ENCODE measurements at regions of chr6 and their contacts with region 1.

Region 1: DNA sequence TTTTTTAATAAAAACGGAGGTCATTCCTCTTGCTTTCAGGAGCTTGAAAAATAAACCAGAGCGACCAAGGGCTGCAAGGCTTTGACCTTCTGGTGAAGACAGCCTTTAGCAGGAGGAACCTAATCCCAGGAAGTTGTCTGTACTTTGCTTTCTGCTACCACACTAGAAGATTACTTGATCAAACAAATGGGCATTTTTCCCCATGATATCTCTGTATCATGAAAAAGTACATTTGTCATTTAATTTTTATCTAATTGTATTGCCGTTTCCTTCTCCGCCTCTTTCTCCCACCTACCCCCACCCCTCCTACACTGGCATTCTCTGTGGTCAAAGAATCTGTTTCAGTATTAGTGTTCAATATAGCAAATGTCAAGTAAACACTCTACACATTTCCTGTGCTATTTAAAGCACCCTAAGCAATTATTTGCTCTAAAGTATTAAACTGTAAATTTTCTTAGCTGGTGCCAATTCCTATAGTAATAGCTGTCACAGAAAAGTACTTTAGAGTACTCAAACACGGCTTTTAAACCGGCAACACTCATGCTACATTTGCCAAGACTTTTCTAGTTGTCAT is 29.7 kb downstream of the ATXN1 start:
- DNase-seq: peak in 2 of 5 donors; percentile 44 to 69
- H3K4me3 ChIP-seq: no peak overlapping the region
- H3K4me3 Mint-ChIP-seq: peak overlapping the region; percentile 73 to 83 (median 79)
- H3K27ac ChIP-seq: peak overlapping the region; percentile 21
- H3K27ac Mint-ChIP-seq: peak overlapping the region; percentile 76 to 96 (median 88)
- H3K4me1 ChIP-seq: peaks cover 37% of the 10 kb centered on the region
- H3K4me1 Mint-ChIP-seq: peaks cover 58 to 87% (median 84%) of the 10 kb centered on the region in 3 donors
- H3K27me3 ChIP-seq: no peaks in the 10 kb centered on the region
- H3K27me3 Mint-ChIP-seq: peaks cover 0 to 3% of the 10 kb centered on the region in 2 donors

Region 2: DNA sequence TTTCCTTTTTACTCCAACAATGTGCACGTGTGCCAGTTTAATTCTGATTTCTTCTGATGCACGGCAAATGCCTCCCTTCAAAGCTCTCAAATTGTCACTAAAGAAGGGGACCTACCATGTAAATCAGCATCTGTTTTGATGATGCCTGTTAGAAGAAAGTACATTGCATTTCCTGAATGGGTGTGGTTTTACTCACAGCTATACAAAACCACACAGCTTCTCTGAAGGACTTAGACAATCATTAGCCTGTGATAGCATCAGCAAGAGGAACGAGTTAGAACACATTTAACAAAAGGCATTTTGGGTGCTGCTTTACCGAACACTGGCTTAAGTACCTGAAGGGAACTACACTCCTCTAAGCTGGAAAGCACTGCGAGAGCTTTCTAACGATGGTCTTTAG is 79.7 kb before region 1 on chr6:
- CTCF ChIA-PET with region 1: no interaction called
- POLR2A ChIA-PET with region 1: interaction called, 13 read pairs
- DNase-seq: peak in 3 of 5 donors; percentile 18 to 74 (median 48)
- H3K4me3 ChIP-seq: no peak overlapping the region
- H3K4me3 Mint-ChIP-seq: peak overlapping the region; percentile 14 to 82 (median 63)
- H3K27ac ChIP-seq: no peak overlapping the region
- H3K27ac Mint-ChIP-seq: peak overlapping the region; percentile 62 to 98 (median 94)
- H3K4me1 ChIP-seq: peaks cover 42% of the 10 kb centered on the region
- H3K4me1 Mint-ChIP-seq: peaks cover 55 to 74% (median 63%) of the 10 kb centered on the region in 3 donors
- H3K27me3 ChIP-seq: no peaks in the 10 kb centered on the region
- H3K27me3 Mint-ChIP-seq: no peaks in the 10 kb centered on the region

Region 3: DNA sequence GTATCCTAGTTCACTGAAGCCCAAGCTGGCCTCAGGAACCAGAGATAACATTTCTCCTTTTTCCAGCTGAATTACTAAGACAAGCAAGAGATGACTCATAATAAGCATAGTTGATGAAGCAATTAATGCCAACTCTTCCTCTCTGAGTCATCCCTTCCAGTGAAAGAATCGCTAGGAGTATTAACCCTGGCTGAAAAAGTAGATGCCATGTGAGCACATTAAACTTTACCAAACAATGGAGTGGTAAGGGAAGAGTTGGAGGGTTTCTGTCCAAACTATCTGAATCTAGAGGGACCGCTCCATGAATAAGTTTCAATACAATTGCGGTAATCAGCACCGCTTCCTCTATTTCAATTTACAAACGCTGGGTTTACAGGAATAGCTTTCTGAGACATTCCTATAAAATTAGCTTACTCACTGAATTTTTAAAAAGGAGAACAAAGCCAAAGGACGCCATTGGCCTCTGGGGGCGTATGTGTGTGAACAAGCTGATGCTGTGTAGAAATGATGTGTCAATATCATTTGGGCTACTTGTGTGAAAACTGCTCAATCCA is 18.6 kb before region 1 on chr6:
- CTCF ChIA-PET with region 1: interaction called, 12 read pairs
- POLR2A ChIA-PET with region 1: no interaction called
- DNase-seq: no peak
- H3K4me3 ChIP-seq: peak overlapping the region; percentile 18
- H3K4me3 Mint-ChIP-seq: peak overlapping the region; percentile 73 to 86 (median 80)
- H3K27ac ChIP-seq: peak overlapping the region; percentile 52
- H3K27ac Mint-ChIP-seq: peak overlapping the region; percentile 87 to 99 (median 94)
- H3K4me1 ChIP-seq: peaks cover 17% of the 10 kb centered on the region
- H3K4me1 Mint-ChIP-seq: peaks cover 50 to 84% (median 78%) of the 10 kb centered on the region in 3 donors
- H3K27me3 ChIP-seq: no peaks in the 10 kb centered on the region
- H3K27me3 Mint-ChIP-seq: no peaks in the 10 kb centered on the region

Region 4: GRCh38 chr6:17182961-17183360 is 451.4 kb after region 1 on chr6:
- CTCF ChIA-PET with region 1: no interaction called
- POLR2A ChIA-PET with region 1: no interaction called
- DNase-seq: no peak
- H3K4me3 ChIP-seq: no peak overlapping the region
- H3K4me3 Mint-ChIP-seq: no peak overlapping the region
- H3K27ac ChIP-seq: no peak overlapping the region
- H3K27ac Mint-ChIP-seq: no peak overlapping the region
- H3K4me1 ChIP-seq: no peaks in the 10 kb centered on the region
- H3K4me1 Mint-ChIP-seq: no peaks in the 10 kb centered on the region
- H3K27me3 ChIP-seq: no peaks in the 10 kb centered on the region
- H3K27me3 Mint-ChIP-seq: peaks cover 21 to 28% of the 10 kb centered on the region in 2 donors